T-cell (primary cell): ENCODE measurements at regions of chr12 and their contacts with region 1.

Region 1: GRCh38 chr12:4526923-4527546 is 11.7 kb upstream of the RAD51AP1 start:
- DNase-seq: peak in 1 of 35 experiments; percentile 30
- ATAC-seq: no peak
- H3K4me3 ChIP-seq: no peak overlapping the region
- H3K4me3 Mint-ChIP-seq: no peak overlapping the region
- H3K27ac ChIP-seq: no peak overlapping the region
- H3K27ac Mint-ChIP-seq: no peak overlapping the region
- H3K4me1 ChIP-seq: peaks cover 6 to 11% of the 10 kb centered on the region in 2 experiments
- H3K4me1 Mint-ChIP-seq: peaks cover 0 to 16% (median 2%) of the 10 kb centered on the region in 3 donors
- H3K27me3 ChIP-seq: no peaks in the 10 kb centered on the region
- H3K27me3 Mint-ChIP-seq: no peaks in the 10 kb centered on the region

Region 2: GRCh38 chr12:4421590-4422031 is 105.4 kb before region 1 on chr12:
- CTCF ChIA-PET with region 1: interaction called, 6 to 16 read pairs
- POLR2A ChIA-PET with region 1: no interaction called
- DNase-seq: peak in 14 of 35 experiments; percentile 4 to 68 (median 8)
- ATAC-seq: peak in 3 of 4 experiments; percentile 40 to 56 (median 42)
- H3K4me3 ChIP-seq: no peak overlapping the region
- H3K4me3 Mint-ChIP-seq: no peak overlapping the region
- H3K27ac ChIP-seq: no peak overlapping the region
- H3K27ac Mint-ChIP-seq: no peak overlapping the region
- H3K4me1 ChIP-seq: no peaks in the 10 kb centered on the region
- H3K4me1 Mint-ChIP-seq: peaks cover 0 to 3% (median 0%) of the 10 kb centered on the region in 3 donors
- H3K27me3 ChIP-seq: peaks cover 0 to 9% of the 10 kb centered on the region in 2 experiments
- H3K27me3 Mint-ChIP-seq: peaks cover 6 to 7% of the 10 kb centered on the region in 2 donors

Region 3: GRCh38 chr12:4483885-4484823 is 42.9 kb before region 1 on chr12:
- CTCF ChIA-PET with region 1: no interaction called
- POLR2A ChIA-PET with region 1: no interaction called
- DNase-seq: no peak
- ATAC-seq: peak in 2 of 4 experiments; percentile 24 to 29
- H3K4me3 ChIP-seq: no peak overlapping the region
- H3K4me3 Mint-ChIP-seq: no peak overlapping the region
- H3K27ac ChIP-seq: no peak overlapping the region
- H3K27ac Mint-ChIP-seq: peak overlapping the region in 1 of 2 donors; percentile 68
- H3K4me1 ChIP-seq: no peaks in the 10 kb centered on the region
- H3K4me1 Mint-ChIP-seq: peaks cover 0 to 8% (median 0%) of the 10 kb centered on the region in 3 donors
- H3K27me3 ChIP-seq: no peaks in the 10 kb centered on the region
- H3K27me3 Mint-ChIP-seq: peaks cover 0 to 3% of the 10 kb centered on the region in 2 donors

Region 4: DNA sequence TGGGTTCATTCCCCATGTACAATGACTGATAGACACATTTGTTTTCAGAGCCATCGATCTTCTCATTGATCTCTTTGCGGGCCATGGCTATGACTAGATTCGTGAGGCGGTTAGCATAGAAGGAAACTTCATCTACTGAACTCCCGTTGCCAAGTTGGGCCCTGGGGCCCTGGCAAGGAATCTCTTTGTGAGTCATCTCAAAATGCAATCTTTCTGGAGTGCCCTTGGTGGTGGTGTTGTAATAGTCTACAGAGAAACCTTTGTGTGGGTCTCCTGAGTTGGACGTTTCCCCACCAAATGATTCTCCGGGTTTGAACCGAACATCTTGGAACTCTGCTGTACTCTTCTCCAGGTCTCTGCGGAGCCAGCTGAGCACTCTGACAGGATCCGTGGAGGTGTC is 101.4 kb after region 1 on chr12:
- CTCF ChIA-PET with region 1: no interaction called
- POLR2A ChIA-PET with region 1: no interaction called
- DNase-seq: no peak
- ATAC-seq: no peak
- H3K4me3 ChIP-seq: no peak overlapping the region
- H3K4me3 Mint-ChIP-seq: no peak overlapping the region
- H3K27ac ChIP-seq: no peak overlapping the region
- H3K27ac Mint-ChIP-seq: no peak overlapping the region
- H3K4me1 ChIP-seq: no peaks in the 10 kb centered on the region
- H3K4me1 Mint-ChIP-seq: no peaks in the 10 kb centered on the region
- H3K27me3 ChIP-seq: no peaks in the 10 kb centered on the region
- H3K27me3 Mint-ChIP-seq: no peaks in the 10 kb centered on the region